ENCODE measurements at regions of chr18 and their contacts with region 1.

Region 1: DNA sequence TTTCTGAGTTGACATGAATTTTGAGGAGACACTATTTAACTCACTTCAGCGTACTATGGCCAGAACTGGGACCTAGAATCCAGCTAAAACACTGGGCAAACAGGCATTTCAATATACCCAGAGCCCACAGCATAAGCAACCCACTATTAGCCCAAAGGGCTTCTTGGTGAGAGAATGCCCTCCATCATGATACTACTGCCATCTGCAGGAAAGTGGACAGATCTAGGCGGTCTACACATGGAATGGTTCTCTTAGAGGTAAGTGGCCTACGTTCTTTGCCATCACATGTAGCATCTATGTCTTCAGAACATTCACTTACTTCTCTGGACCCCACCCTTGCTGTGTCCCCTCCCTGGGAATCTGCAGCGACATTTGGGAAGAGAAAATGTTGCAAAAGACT is 181.3 kb upstream of the LINC00305 start:
- DNase-seq: no peak
- ATAC-seq: no peak
- H3K4me3 ChIP-seq: no peak overlapping the region
- H3K4me3 Mint-ChIP-seq: no peak overlapping the region
- H3K27ac ChIP-seq: no peak overlapping the region
- H3K27ac Mint-ChIP-seq: no peak overlapping the region
- H3K4me1 ChIP-seq: no peaks in the 10 kb centered on the region
- H3K4me1 Mint-ChIP-seq: no peaks in the 10 kb centered on the region
- H3K27me3 ChIP-seq: no peaks in the 10 kb centered on the region
- H3K27me3 Mint-ChIP-seq: no peaks in the 10 kb centered on the region

Region 2: GRCh38 chr18:63963615-63964256 is 366.4 kb before region 1 on chr18:
- CTCF ChIA-PET with region 1: no interaction called
- POLR2A ChIA-PET with region 1: no interaction called
- DNase-seq: peak in 28 of 35 experiments; percentile 19 to 75 (median 37)
- ATAC-seq: peak; percentile 57 to 78 (median 75)
- H3K4me3 ChIP-seq: no peak overlapping the region
- H3K4me3 Mint-ChIP-seq: no peak overlapping the region
- H3K27ac ChIP-seq: no peak overlapping the region
- H3K27ac Mint-ChIP-seq: no peak overlapping the region
- H3K4me1 ChIP-seq: no peaks in the 10 kb centered on the region
- H3K4me1 Mint-ChIP-seq: peaks cover 0 to 3% (median 0%) of the 10 kb centered on the region in 3 donors
- H3K27me3 ChIP-seq: peaks cover 2 to 3% of the 10 kb centered on the region in 2 experiments
- H3K27me3 Mint-ChIP-seq: peaks cover 13 to 29% of the 10 kb centered on the region in 2 donors

Region 3: GRCh38 chr18:64438178-64438577 is 108.0 kb after region 1 on chr18:
- CTCF ChIA-PET with region 1: no interaction called
- POLR2A ChIA-PET with region 1: interaction called in 1 of 2 experiments, 13 read pairs
- DNase-seq: no peak
- ATAC-seq: no peak
- H3K4me3 ChIP-seq: no peak overlapping the region
- H3K4me3 Mint-ChIP-seq: no peak overlapping the region
- H3K27ac ChIP-seq: no peak overlapping the region
- H3K27ac Mint-ChIP-seq: no peak overlapping the region
- H3K4me1 ChIP-seq: no peaks in the 10 kb centered on the region
- H3K4me1 Mint-ChIP-seq: no peaks in the 10 kb centered on the region
- H3K27me3 ChIP-seq: no peaks in the 10 kb centered on the region
- H3K27me3 Mint-ChIP-seq: no peaks in the 10 kb centered on the region